ENCODE measurements at regions of chr21 and their contacts with region 1.

Region 1: DNA sequence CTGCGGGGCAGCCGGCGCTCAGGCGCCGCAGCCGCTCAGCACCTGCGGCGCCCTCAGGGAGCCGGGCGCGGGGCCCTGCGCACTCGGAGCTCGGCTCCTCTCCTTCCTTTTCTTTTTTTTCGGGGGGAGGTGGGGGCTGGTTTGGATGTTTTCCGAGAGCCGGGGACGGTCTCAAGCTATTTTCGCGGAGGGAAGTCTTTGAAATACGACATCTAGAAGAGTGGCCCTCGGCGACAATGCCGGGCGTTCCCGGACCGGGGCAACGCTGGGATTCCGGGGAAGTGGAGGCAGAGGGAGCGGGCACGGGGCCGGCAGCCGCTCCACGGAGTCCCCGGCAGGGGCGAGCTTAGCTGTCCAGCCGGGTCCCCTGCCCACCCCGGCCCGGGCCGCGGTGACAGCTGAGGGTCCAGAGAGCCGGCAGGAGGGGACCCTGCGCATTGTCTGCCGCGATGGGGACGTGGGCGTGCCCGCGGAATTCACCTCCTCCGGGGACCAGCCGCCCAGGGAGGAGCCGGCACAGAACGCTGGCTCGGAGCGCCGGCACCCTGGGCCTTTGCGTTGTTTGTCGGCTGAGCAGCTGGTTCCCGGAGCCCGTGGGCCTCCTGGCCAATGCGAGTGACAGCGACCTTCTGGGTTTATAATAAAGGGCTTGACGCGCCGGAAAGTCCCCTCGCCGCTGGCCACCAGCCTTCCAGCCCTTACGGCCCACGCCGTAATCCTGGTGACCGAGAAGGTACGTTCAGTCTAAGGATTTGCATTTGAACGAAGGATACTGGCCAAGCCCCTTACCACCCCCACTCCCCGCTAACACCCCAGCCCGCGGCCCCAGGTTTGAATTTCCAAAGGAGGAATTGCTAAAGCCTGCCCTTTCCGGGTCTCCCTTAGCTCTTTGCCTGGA is 582 bp downstream of the SLC37A1 start:
- DNase-seq: peak; percentile 64
- H3K4me3 Mint-ChIP-seq: peak overlapping the region; percentile 62
- H3K27ac Mint-ChIP-seq: peak overlapping the region; percentile 1
- H3K4me1 Mint-ChIP-seq: peaks cover 13% of the 10 kb centered on the region
- H3K27me3 Mint-ChIP-seq: peaks cover 27% of the 10 kb centered on the region

Region 2: DNA sequence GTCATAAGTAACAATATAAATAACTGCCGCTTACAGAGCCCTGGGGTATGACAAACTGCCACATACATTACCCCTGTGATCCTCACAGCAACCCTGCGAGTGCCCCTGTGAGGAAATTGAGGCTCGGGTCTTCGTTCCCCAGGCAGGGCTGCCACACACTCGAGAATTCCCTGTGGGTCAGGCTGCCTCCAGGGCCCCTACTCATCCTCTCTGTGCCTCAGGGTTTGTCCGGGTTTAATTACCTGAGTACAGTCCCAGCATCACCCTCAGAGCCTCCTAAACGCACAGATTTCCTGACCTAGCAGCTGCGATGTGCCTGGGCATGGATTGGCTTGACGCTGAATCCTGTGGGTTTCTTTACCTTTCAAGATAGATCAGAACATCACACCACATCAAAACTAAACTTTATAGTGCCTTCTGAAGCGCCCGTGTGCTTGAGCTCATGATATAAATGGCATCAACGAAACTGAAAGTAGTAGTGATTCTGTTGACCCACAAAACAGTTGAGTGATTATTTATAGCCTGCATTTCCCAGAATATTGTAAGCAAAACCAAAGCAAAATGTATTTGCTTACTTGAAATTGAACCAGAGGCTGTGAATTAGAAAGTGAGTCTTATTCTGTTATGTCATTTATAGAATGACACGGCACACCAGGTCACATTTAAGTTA is 13.4 kb after region 1 on chr21:
- CTCF ChIA-PET with region 1: no interaction called
- POLR2A ChIA-PET with region 1: interaction called, 27 read pairs
- DNase-seq: peak; percentile 58
- H3K4me3 Mint-ChIP-seq: peak overlapping the region; percentile 71
- H3K27ac Mint-ChIP-seq: peak overlapping the region; percentile 88
- H3K4me1 Mint-ChIP-seq: peaks cover 41% of the 10 kb centered on the region
- H3K27me3 Mint-ChIP-seq: peaks cover 6% of the 10 kb centered on the region